ENCODE measurements at regions of chr13 and their contacts with region 1.

Region 1: GRCh38 chr13:97432917-97433726 is 847 bp upstream of the RAP2A start:
- DNase-seq: peak; percentile 98
- H3K4me3 Mint-ChIP-seq: peak overlapping the region; percentile 86
- H3K27ac Mint-ChIP-seq: peak overlapping the region; percentile 95
- H3K4me1 Mint-ChIP-seq: peaks cover 22% of the 10 kb centered on the region
- H3K27me3 Mint-ChIP-seq: no peaks in the 10 kb centered on the region

Region 2: DNA sequence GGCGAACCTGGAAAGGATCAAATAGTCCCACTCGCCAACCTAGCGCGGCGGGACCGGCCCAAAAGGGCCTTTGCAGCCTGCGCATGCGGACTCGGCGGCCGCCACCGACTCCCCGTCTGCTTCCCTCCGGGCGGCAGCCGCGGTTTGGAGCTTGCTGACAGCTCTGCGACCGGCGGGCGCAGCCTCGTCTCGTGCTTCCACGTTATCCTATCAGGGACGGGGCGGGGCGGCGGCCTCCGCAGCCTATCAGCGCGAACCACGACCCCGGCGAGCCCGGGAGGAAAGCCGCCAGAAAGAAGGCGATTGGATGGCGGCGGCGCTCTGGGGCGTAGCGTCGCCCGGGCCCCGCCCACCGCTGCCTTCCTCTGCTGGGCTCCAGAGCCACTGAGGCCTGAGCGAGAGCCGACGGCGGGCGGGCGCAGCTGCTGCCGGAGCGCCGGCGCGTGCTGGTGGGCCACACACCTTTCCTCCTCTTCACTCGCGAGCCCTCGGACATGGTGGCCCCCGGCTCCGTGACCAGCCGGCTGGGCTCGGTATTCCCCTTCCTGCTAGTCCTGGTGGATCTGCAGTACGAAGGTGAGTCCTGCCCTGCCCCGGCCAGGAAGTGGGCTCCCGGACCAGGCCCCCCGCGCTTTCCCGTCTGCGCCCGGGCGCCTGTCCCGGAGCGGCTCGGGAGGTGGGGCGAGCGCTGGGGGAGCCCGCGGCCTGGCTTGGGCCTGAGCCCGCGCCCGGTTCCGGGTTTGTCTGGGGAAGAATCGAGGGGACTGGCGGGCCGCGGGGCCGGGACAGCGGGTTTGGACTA is 1756.2 kb before region 1 on chr13 and contains the start of gene DNAJC3:
- CTCF ChIA-PET with region 1: no interaction called
- intact Hi-C with region 1: loop called (anchors 1 kb)
- DNase-seq: peak; percentile 98
- H3K4me3 Mint-ChIP-seq: peak within 1 kb of the TSS; percentile 93
- H3K27ac Mint-ChIP-seq: peak within 1 kb of the TSS; percentile 86
- H3K4me1 Mint-ChIP-seq: peaks cover 53% of the 10 kb centered on the region
- H3K27me3 Mint-ChIP-seq: no peaks in the 10 kb centered on the region
- total RNA-seq, gene DNAJC3: 13.8 to 14.0 TPM

Region 3: GRCh38 chr13:97221989-97222700 is 211.0 kb before region 1 on chr13 and contains the start of gene MBNL2:
- CTCF ChIA-PET with region 1: interaction called, 4 read pairs
- intact Hi-C with region 1: loop called (anchors 1 kb)
- DNase-seq: peak; percentile 93
- H3K4me3 Mint-ChIP-seq: peak within 1 kb of the TSS; percentile 79
- H3K27ac Mint-ChIP-seq: peak within 1 kb of the TSS; percentile 87
- H3K4me1 Mint-ChIP-seq: peaks cover 33% of the 10 kb centered on the region
- H3K27me3 Mint-ChIP-seq: no peaks in the 10 kb centered on the region
- total RNA-seq, gene MBNL2: 16.8 to 18.8 TPM

Region 4: GRCh38 chr13:97367016-97367822 is 65.9 kb before region 1 on chr13:
- CTCF ChIA-PET with region 1: no interaction called
- intact Hi-C with region 1: loop called (anchors 2 kb)
- DNase-seq: no peak
- H3K4me3 Mint-ChIP-seq: no peak overlapping the region
- H3K27ac Mint-ChIP-seq: no peak overlapping the region
- H3K4me1 Mint-ChIP-seq: peaks cover 10% of the 10 kb centered on the region
- H3K27me3 Mint-ChIP-seq: no peaks in the 10 kb centered on the region

Region 5: DNA sequence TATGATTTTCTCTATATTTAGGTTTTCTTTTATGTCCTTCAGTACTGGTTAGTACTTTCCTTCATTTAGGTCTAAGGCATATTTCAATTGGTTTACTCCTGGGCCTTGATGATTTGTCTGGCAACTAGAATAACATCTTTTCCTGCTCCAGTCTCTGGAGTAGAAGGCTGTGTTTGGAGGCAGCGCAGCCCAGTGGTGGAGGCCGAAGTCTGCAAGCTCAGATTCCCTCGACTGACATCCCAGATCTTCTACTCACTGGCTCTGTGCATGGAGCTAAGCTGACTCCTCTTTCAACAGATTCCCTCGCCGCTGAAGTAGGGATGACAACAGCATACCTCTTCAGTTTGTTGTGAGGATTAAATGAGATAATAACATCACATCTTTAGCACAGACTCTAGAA is 141.8 kb after region 1 on chr13:
- CTCF ChIA-PET with region 1: interaction called, 3 read pairs
- intact Hi-C with region 1: loop called (anchors 1 kb)
- DNase-seq: peak; percentile 51
- H3K4me3 Mint-ChIP-seq: no peak overlapping the region
- H3K27ac Mint-ChIP-seq: no peak overlapping the region
- H3K4me1 Mint-ChIP-seq: no peaks in the 10 kb centered on the region
- H3K27me3 Mint-ChIP-seq: peaks cover 6% of the 10 kb centered on the region

Region 6: GRCh38 chr13:97715763-97716162 is 282.6 kb after region 1 on chr13:
- CTCF ChIA-PET with region 1: no interaction called
- intact Hi-C with region 1: no loop called
- DNase-seq: no peak
- H3K4me3 Mint-ChIP-seq: no peak overlapping the region
- H3K27ac Mint-ChIP-seq: no peak overlapping the region
- H3K4me1 Mint-ChIP-seq: no peaks in the 10 kb centered on the region
- H3K27me3 Mint-ChIP-seq: peaks cover 4% of the 10 kb centered on the region

Region 7: GRCh38 chr13:98576963-98577822 is 1144.1 kb after region 1 on chr13 and contains the start of gene STK24:
- CTCF ChIA-PET with region 1: no interaction called
- intact Hi-C with region 1: loop called (anchors 2 kb)
- DNase-seq: peak; percentile 46
- H3K4me3 Mint-ChIP-seq: peak within 1 kb of the TSS; percentile 84
- H3K27ac Mint-ChIP-seq: peak within 1 kb of the TSS; percentile 88
- H3K4me1 Mint-ChIP-seq: peaks cover 35% of the 10 kb centered on the region
- H3K27me3 Mint-ChIP-seq: no peaks in the 10 kb centered on the region
- total RNA-seq, gene STK24: 95.5 to 96.7 TPM